Left cardiac atrium (tissue), 4 donors: ENCODE measurements at regions of chr6 and their contacts with region 1.

Region 1: GRCh38 chr6:154510143-154510905 is at the start of gene CNKSR3:
- DNase-seq: peak; percentile 91
- ATAC-seq: peak; percentile 89 to 92
- total RNA-seq, gene CNKSR3: 16.6 to 18.8 TPM

Region 2: GRCh38 chr6:154390034-154390433 is 120.3 kb before region 1 on chr6:
- intact Hi-C with region 1: no loop called
- DNase-seq: no peak
- ATAC-seq: no peak

Region 3: GRCh38 chr6:154448448-154449096 is 61.8 kb before region 1 on chr6:
- intact Hi-C with region 1: loop called in 1 of 2 experiments (anchors 5 kb)
- DNase-seq: no peak
- ATAC-seq: peak; percentile 82 to 90

Region 4: GRCh38 chr6:154593122-154593521 is 82.8 kb after region 1 on chr6:
- intact Hi-C with region 1: loop called in 1 of 2 experiments (anchors 5 kb)
- DNase-seq: peak; percentile 40
- ATAC-seq: peak; percentile 85 to 90

Region 5: DNA sequence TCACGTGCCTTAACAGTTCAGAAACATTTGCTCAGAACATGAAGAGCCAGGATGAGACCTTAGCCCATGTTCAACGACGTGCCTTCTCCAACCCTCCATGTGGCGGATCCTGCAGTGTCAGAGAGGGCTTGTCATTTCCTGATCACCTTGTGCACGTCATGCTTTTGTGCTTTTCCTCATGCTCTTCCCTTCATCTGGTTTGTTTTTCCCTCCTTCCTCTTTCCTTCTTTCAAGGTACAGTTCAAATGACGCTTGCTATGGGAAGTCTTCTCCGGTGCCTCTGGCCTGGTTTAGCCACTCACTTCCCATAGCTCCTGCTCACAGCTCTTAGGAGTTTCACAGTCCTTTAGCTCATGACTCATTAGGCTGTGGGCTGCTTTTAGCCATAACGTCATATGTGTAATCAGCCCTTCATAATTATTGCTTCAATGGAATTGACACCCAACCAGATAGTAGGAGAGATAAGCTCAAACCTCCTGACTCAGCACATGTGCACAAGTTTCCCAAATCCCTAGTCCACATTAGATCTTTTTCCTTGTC is 102.9 kb after region 1 on chr6:
- intact Hi-C with region 1: loop called in 1 of 2 experiments (anchors 5 kb)
- DNase-seq: no peak
- ATAC-seq: peak in 1 of 2 donors; percentile 79

Region 6: GRCh38 chr6:155013457-155013876 is 503.1 kb after region 1 on chr6:
- intact Hi-C with region 1: no loop called
- DNase-seq: no peak
- ATAC-seq: no peak